HEK293T (cell line): ENCODE measurements at regions of chr16 and their contacts with region 1.

Region 1: DNA sequence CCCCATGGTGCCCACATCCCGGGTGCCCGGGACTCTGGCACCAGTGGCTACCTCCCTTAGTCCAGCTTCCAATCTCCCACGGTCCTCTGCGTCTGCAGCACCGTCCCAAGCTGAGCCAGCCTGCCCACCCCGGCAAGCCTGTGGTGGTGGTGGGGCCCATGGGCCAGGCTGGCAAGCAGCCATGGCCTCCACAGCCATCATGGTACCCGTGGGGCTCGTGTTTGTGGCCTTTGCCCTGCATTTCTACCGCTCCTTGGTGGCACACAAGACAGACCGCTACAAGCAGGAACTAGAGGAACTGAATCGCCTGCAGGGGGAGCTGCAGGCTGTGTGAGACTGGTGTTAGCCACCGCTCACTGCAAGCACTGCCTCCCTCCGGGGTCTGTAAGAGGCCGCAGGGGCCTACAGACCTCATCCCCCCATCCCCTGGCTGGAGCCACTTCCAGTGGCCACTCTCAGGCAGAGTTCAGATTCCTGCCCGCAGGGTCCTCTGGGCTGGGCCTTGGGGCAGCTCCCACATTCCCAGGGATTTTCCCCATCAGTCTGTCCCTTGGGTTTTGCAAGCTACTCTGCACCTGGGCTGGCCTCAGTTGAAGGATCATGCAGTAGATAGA is 3.9 kb upstream of the SETD1A start:
- DNase-seq: peak; percentile 81

Region 2: GRCh38 chr16:30867747-30868146 is 85.9 kb before region 1 on chr16:
- CTCF ChIA-PET with region 1: no interaction called
- POLR2A ChIA-PET with region 1: no interaction called
- DNase-seq: peak; percentile 69

Region 3: DNA sequence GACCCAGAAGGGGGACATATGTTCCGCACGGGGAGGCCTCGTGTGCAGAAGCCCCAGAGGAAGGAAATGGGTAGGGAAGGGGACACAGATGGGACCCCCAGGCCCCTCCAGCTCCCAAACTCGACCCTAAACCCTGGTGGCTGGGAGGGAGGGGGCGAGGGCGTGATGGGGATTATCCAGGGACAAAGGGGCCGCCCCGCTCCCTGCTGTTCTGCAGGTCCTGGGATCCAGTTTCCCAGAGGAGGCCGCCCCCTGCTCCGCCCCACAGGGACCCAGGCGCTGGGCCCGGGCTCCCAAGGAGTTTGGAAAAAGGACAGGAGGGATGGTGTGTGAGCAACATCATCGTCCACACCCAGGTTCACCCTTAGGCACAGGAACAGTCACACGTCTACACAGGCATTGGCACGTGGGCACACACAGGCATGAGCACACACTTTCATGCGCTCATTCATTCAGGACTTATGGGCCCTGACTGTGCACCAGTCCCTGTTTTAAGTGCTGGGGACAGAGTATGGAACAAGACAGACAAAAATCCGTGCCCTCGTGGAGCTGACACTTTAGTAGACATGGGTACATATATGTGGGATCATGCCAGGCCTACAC is 43.1 kb before region 1 on chr16:
- CTCF ChIA-PET with region 1: no interaction called
- POLR2A ChIA-PET with region 1: no interaction called
- DNase-seq: no peak

Region 4: DNA sequence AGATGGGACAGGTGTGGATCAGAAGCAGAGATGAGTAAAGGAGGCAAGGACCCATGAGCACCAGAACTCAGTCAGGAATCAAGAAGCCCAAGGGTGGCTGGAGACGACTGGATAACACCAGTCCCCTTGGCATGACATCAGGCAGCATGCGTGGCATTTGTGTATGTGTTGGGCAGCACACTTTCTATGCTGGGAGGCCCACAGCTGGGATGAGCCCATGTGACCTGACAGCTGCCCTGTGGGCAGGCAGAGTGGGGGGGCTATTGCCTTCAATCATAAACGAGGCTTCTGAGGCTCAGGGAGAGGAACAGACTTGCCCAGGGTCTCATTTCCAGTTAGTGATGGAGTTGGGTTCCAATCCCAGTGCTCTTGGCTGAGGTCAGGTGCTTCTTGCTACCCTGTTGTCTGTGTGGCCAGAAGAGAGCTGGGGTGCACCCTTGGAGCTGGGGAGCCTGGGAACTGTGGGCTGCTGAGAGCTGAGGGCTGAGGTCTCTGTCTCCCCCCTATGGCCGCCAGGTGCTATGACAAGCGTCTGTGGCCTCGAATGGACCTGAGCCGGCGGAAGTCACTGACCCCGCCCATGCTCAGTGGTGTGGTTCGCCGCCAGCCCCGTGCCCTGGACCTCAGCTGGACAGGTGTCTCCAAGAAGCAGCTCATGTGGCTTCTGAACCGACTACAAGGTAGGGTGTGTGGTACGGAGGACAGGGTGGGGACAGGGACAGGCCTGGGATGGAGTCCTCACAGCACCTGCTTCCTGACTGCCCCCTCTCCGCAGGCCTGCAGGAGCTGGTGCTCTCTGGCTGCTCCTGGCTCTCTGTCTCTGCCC is 11.8 kb before region 1 on chr16:
- CTCF ChIA-PET with region 1: interaction called, 39 read pairs
- POLR2A ChIA-PET with region 1: no interaction called
- DNase-seq: peak; percentile 93